AG04450 (cell line): ENCODE measurements at regions of chr3 and their contacts with region 1.

Region 1: GRCh38 chr3:186849374-186849975 is 7.0 kb downstream of the ADIPOQ start:
- DNase-seq: no peak
- H3K4me3 ChIP-seq: no peak overlapping the region
- H3K27ac ChIP-seq: no peak overlapping the region
- H3K27me3 ChIP-seq: peaks cover 27% of the 10 kb centered on the region
- CTCF ChIP-seq: peak; percentile 51

Region 2: GRCh38 chr3:186693843-186694242 is 155.6 kb before region 1 on chr3:
- CTCF ChIA-PET with region 1: no interaction called
- POLR2A ChIA-PET with region 1: no interaction called
- DNase-seq: no peak
- H3K4me3 ChIP-seq: no peak overlapping the region
- H3K27ac ChIP-seq: no peak overlapping the region
- H3K27me3 ChIP-seq: peaks cover 8% of the 10 kb centered on the region
- CTCF ChIP-seq: no peak

Region 3: GRCh38 chr3:186909078-186909853 is 59.8 kb after region 1 on chr3:
- CTCF ChIA-PET with region 1: no interaction called
- POLR2A ChIA-PET with region 1: no interaction called
- DNase-seq: no peak
- H3K4me3 ChIP-seq: no peak overlapping the region
- H3K27ac ChIP-seq: no peak overlapping the region
- H3K27me3 ChIP-seq: no peaks in the 10 kb centered on the region
- CTCF ChIP-seq: no peak

Region 4: GRCh38 chr3:186967686-186968085 is 118.2 kb after region 1 on chr3:
- CTCF ChIA-PET with region 1: interaction called, 15 read pairs
- POLR2A ChIA-PET with region 1: no interaction called
- DNase-seq: no peak
- H3K4me3 ChIP-seq: no peak overlapping the region
- H3K27ac ChIP-seq: no peak overlapping the region
- H3K27me3 ChIP-seq: no peaks in the 10 kb centered on the region
- CTCF ChIP-seq: no peak

Region 5: DNA sequence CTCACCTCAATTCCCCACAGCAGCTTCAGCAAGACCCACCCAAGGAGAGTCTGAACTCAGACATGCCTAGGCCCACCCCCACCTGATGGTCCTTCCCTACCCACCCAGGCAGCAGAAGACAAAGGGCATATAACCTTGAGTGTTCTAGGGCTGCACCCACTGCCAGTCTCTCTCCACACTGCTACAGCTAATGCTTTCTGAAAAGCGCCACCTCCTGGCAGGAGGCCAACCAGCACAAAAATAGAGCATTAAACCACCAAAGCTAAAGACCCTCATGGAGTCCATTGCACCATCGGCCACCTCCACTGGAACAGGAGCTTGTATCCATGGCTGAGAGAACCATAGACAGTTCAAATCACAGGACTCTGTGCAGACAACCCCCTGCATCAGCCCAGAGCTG is 301.1 kb after region 1 on chr3:
- CTCF ChIA-PET with region 1: interaction called, 11 read pairs
- POLR2A ChIA-PET with region 1: no interaction called
- DNase-seq: no peak
- H3K4me3 ChIP-seq: no peak overlapping the region
- H3K27ac ChIP-seq: no peak overlapping the region
- H3K27me3 ChIP-seq: peaks cover 19% of the 10 kb centered on the region
- CTCF ChIP-seq: no peak